ENCODE measurements at regions of chr14 and their contacts with region 1.

Region 1: GRCh38 chr14:92930737-92931602 is 8.0 kb downstream of the CHGA start:
- DNase-seq: no peak
- H3K4me3 ChIP-seq: no peak overlapping the region
- H3K27ac ChIP-seq: no peak overlapping the region
- H3K4me1 ChIP-seq: no peaks in the 10 kb centered on the region
- H3K27me3 ChIP-seq: no peaks in the 10 kb centered on the region; a peak in 1 of 7 replicates
- CTCF ChIP-seq: no peak
- EP300 ChIP-seq: no peak
- POLR2A ChIP-seq: no peak
- RAD21 ChIP-seq: no peak

Region 2: GRCh38 chr14:92690171-92691036 is 240.6 kb before region 1 on chr14:
- CTCF ChIA-PET with region 1: no interaction called
- POLR2A ChIA-PET with region 1: no interaction called
- DNase-seq: no peak
- H3K4me3 ChIP-seq: no peak overlapping the region
- H3K27ac ChIP-seq: no peak overlapping the region
- H3K4me1 ChIP-seq: peaks cover 0 to 7% (median 3%) of the 10 kb centered on the region in 4 experiments; a peak in 4 of 7 replicates
- H3K27me3 ChIP-seq: peaks cover 10 to 21% (median 20%) of the 10 kb centered on the region in 4 experiments; a peak in 6 of 7 replicates
- CTCF ChIP-seq: peak; percentile 26 to 55 (median 41); a peak in 3 of 4 replicates
- EP300 ChIP-seq: no peak
- POLR2A ChIP-seq: no peak
- RAD21 ChIP-seq: peak; percentile 16 to 51; a peak in 3 of 4 replicates

Region 3: GRCh38 chr14:92914087-92914656 is 16.8 kb before region 1 on chr14:
- CTCF ChIA-PET with region 1: interaction called, 10 read pairs
- POLR2A ChIA-PET with region 1: no interaction called
- DNase-seq: peak in 1 of 2 experiments; percentile 85
- H3K4me3 ChIP-seq: no peak overlapping the region
- H3K27ac ChIP-seq: no peak overlapping the region
- H3K4me1 ChIP-seq: no peaks in the 10 kb centered on the region
- H3K27me3 ChIP-seq: peaks cover 0 to 3% (median 1%) of the 10 kb centered on the region in 4 experiments; a peak in 3 of 7 replicates
- CTCF ChIP-seq: no peak
- EP300 ChIP-seq: no peak
- POLR2A ChIP-seq: no peak
- RAD21 ChIP-seq: no peak; a peak in 1 of 4 replicates

Region 4: GRCh38 chr14:93086441-93087055 is 155.6 kb after region 1 on chr14:
- CTCF ChIA-PET with region 1: no interaction called
- POLR2A ChIA-PET with region 1: no interaction called
- DNase-seq: no peak
- H3K4me3 ChIP-seq: no peak overlapping the region
- H3K27ac ChIP-seq: peak overlapping the region; percentile 73
- H3K4me1 ChIP-seq: peaks cover 0 to 23% (median 11%) of the 10 kb centered on the region in 4 experiments; a peak in 6 of 7 replicates
- H3K27me3 ChIP-seq: no peaks in the 10 kb centered on the region
- CTCF ChIP-seq: no peak
- EP300 ChIP-seq: no peak
- POLR2A ChIP-seq: no peak
- RAD21 ChIP-seq: no peak